Transverse colon (tissue), 4 donors: ENCODE measurements at regions of chr1 and their contacts with region 1.

Region 1: DNA sequence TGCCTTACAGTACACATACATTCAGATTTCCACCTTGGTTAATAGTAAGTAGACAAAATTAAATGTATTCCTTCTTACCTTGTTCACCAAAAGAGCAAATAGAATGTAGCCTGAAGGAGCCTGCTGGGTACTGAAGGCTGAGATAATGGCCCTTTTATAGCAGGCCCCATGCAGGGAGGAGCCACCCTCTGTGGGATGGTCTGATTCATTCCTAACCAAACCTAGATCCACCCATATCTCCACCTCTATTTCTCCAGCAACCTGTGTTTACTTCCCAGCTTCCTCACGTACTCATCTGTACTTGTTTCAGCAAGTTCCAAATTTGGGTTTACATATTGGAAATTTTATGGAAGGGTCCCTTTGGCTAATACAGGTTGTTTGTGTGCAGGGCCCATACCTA is at the start of gene FLG:
- DNase-seq: no peak
- H3K4me3 ChIP-seq: no peak within 1 kb of the TSS
- H3K27ac ChIP-seq: no peak within 1 kb of the TSS
- H3K4me1 ChIP-seq: no peaks in the 10 kb centered on the region
- H3K27me3 ChIP-seq: no peaks in the 10 kb centered on the region
- CTCF ChIP-seq: no peak
- EP300 ChIP-seq: no peak
- POLR2A ChIP-seq: no peak
- total RNA-seq, gene FLG: not detected

Region 2: GRCh38 chr1:152398812-152399698 is 73.9 kb after region 1 on chr1:
- in situ Hi-C with region 1: no loop called
- intact Hi-C with region 1: loop called (anchors 2 kb)
- DNase-seq: no peak
- H3K4me3 ChIP-seq: no peak overlapping the region
- H3K27ac ChIP-seq: no peak overlapping the region
- H3K4me1 ChIP-seq: no peaks in the 10 kb centered on the region
- H3K27me3 ChIP-seq: peaks cover under 1% of the 10 kb centered on the region
- CTCF ChIP-seq: peak in 3 of 5 experiments; percentile 24 to 25 (median 25)
- EP300 ChIP-seq: no peak
- POLR2A ChIP-seq: no peak